Cardiac septum (tissue), 1 donor: ENCODE measurements at regions of chr3 and their contacts with region 1.

Region 1: DNA sequence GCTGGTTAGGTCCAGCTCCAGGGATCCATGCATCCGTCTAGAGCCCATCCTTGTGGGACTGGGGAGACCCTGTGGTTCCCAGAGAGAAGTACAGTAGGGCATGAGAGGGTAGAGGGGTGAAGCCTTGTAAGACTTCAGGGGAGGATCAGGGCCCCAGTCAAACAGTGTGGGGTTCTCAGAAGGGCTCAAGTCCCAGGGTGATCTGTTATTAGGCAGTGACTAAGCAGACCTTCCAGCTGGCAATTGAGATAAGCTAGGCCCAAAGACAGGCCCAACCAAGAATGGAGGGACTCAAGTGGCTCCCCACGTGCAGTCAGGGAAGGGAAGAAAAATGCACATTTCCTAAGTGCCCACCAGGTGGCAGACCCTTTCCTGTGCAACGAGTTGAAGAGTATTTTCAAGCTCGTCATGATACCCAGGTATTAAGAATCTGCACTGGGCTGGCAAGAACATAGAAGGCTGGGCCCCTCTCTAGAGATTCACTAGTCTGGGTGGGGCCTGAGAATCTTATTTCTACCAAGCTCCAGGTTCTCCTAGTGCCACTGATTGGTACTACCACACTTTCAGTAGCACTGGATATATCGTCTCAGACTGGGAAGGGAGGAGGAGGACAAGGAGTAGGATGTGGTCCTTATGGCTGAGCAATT is 240.8 kb downstream of the NR1D2 start:
- DNase-seq: no peak

Region 2: GRCh38 chr3:24042174-24043059 is 143.4 kb before region 1 on chr3:
- intact Hi-C with region 1: no loop called
- DNase-seq: no peak

Region 3: GRCh38 chr3:24069045-24069444 is 116.8 kb before region 1 on chr3:
- intact Hi-C with region 1: loop called (anchors 10 kb)
- DNase-seq: no peak

Region 4: GRCh38 chr3:24763415-24763814 is 577.6 kb after region 1 on chr3:
- intact Hi-C with region 1: no loop called
- DNase-seq: no peak